Activated CD4-positive, alpha-beta memory T cell treated with anti-CD3 and anti-CD28 coated beads for 36 hours (primary cell): ENCODE measurements at regions of chr20 and their contacts with region 1.

Region 1: GRCh38 chr20:45044084-45044573 is 56.8 kb downstream of the KCNS1 start:
- DNase-seq: peak; percentile 41
- H3K4me3 Mint-ChIP-seq: no peak overlapping the region
- H3K27ac Mint-ChIP-seq: peak overlapping the region; percentile 75
- H3K4me1 Mint-ChIP-seq: peaks cover 74% of the 10 kb centered on the region
- H3K27me3 Mint-ChIP-seq: no peaks in the 10 kb centered on the region

Region 2: GRCh38 chr20:44928595-44928994 is 115.5 kb before region 1 on chr20:
- CTCF ChIA-PET with region 1: no interaction called
- POLR2A ChIA-PET with region 1: no interaction called
- intact Hi-C with region 1: no loop called
- DNase-seq: no peak
- H3K4me3 Mint-ChIP-seq: no peak overlapping the region
- H3K27ac Mint-ChIP-seq: no peak overlapping the region
- H3K4me1 Mint-ChIP-seq: no peaks in the 10 kb centered on the region
- H3K27me3 Mint-ChIP-seq: no peaks in the 10 kb centered on the region

Region 3: DNA sequence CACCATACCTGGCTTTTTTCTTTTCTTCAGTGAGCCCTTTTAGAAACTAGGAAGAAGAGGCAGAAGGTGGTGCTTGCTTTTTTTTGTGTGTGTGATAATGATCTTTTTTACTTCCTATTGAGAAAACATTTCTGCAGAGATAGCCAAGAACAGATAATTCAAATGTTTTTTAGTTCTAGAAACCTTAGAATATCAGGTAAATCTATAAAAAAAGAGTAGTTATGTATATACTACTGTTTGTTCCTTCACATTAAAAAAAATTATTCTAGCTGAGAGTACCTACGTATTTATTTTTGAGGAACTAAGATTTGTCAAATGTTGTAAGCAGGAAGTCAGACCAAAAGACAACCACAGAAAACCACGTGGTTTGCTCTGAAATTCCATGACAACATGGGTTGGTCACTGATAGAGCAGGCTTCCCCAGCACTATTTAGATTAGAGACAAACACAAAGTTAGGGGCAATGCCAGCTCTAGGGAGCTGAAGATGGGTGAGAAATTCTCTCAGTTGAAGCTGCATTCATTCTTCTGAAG is 65.0 kb before region 1 on chr20:
- CTCF ChIA-PET with region 1: interaction called, 10 read pairs
- POLR2A ChIA-PET with region 1: no interaction called
- intact Hi-C with region 1: no loop called
- DNase-seq: peak; percentile 77
- H3K4me3 Mint-ChIP-seq: peak overlapping the region; percentile 50
- H3K27ac Mint-ChIP-seq: peak overlapping the region; percentile 88
- H3K4me1 Mint-ChIP-seq: peaks cover 79% of the 10 kb centered on the region
- H3K27me3 Mint-ChIP-seq: no peaks in the 10 kb centered on the region

Region 4: DNA sequence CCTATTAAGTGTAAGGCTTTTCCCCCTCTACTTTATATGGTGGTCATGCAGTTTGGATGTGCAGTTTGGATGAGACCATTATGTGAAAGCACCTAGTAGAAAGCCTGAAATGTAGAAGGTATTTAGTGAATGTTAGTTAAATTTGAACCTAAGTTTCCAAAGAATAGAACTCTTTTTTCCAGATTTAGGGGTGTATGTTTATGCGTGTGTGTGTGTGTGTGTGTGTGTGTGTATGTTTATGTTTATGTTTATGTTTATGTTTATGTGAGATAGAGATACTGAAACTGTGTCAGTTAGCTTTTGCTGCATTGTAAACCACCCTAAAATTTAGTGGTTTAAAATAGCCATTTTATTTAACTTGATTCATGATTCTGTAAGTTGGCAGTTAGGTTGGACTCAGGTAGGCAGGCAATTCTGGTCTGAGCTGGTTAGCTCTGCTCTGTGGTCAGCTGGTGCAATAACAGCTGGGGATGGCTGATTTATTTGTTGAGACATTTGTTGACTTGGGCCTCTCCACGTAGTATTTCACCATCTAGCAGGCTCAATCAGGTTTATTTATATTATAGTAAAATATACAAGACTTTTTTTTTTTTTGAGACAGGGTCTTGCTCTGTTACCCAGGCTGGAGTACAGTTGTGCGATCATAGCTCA is 23.8 kb before region 1 on chr20:
- CTCF ChIA-PET with region 1: interaction called, 13 read pairs
- POLR2A ChIA-PET with region 1: interaction called, 4 read pairs
- intact Hi-C with region 1: no loop called
- DNase-seq: no peak
- H3K4me3 Mint-ChIP-seq: no peak overlapping the region
- H3K27ac Mint-ChIP-seq: no peak overlapping the region
- H3K4me1 Mint-ChIP-seq: peaks cover 69% of the 10 kb centered on the region
- H3K27me3 Mint-ChIP-seq: no peaks in the 10 kb centered on the region

Region 5: GRCh38 chr20:45061244-45061643 is 17.1 kb after region 1 on chr20:
- CTCF ChIA-PET with region 1: interaction called, 19 read pairs
- POLR2A ChIA-PET with region 1: no interaction called
- intact Hi-C with region 1: loop called (anchors 2 kb)
- DNase-seq: peak; percentile 39
- H3K4me3 Mint-ChIP-seq: no peak overlapping the region
- H3K27ac Mint-ChIP-seq: no peak overlapping the region
- H3K4me1 Mint-ChIP-seq: peaks cover 72% of the 10 kb centered on the region
- H3K27me3 Mint-ChIP-seq: no peaks in the 10 kb centered on the region

Region 6: GRCh38 chr20:45104786-45105185 is 60.7 kb after region 1 on chr20:
- CTCF ChIA-PET with region 1: interaction called, 72 read pairs
- POLR2A ChIA-PET with region 1: no interaction called
- intact Hi-C with region 1: no loop called
- DNase-seq: no peak
- H3K4me3 Mint-ChIP-seq: no peak overlapping the region
- H3K27ac Mint-ChIP-seq: no peak overlapping the region
- H3K4me1 Mint-ChIP-seq: peaks cover 3% of the 10 kb centered on the region
- H3K27me3 Mint-ChIP-seq: peaks cover 14% of the 10 kb centered on the region

Region 7: GRCh38 chr20:45138561-45139300 is 94.6 kb after region 1 on chr20:
- CTCF ChIA-PET with region 1: interaction called, 12 read pairs
- POLR2A ChIA-PET with region 1: no interaction called
- intact Hi-C with region 1: no loop called
- DNase-seq: peak; percentile 88
- H3K4me3 Mint-ChIP-seq: no peak overlapping the region
- H3K27ac Mint-ChIP-seq: no peak overlapping the region
- H3K4me1 Mint-ChIP-seq: no peaks in the 10 kb centered on the region
- H3K27me3 Mint-ChIP-seq: peaks cover 5% of the 10 kb centered on the region

Region 8: DNA sequence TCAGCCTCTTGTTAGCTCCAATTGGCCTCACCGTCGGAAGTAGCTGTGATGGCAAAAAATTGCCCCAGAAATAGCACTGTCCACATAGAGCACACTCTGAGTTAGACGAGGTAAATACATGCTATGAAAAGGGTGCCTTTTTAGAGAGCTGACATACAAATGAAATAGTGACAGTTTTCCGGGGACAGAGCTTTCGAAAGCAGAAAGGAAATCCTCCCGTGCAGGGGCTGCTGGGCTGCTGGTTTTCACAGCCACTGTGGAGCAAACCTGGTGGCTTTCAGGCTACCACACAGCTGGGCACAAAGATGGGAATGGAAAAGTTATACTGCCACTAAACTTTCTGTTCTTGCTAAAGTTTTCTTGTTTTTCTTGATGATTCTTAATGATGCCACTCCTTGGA is 202.0 kb after region 1 on chr20:
- CTCF ChIA-PET with region 1: no interaction called
- POLR2A ChIA-PET with region 1: no interaction called
- intact Hi-C with region 1: no loop called
- DNase-seq: no peak
- H3K4me3 Mint-ChIP-seq: no peak overlapping the region
- H3K27ac Mint-ChIP-seq: no peak overlapping the region
- H3K4me1 Mint-ChIP-seq: no peaks in the 10 kb centered on the region
- H3K27me3 Mint-ChIP-seq: peaks cover 32% of the 10 kb centered on the region